Gastrocnemius medialis (tissue), 4 donors: ENCODE measurements at regions of chr12 and their contacts with region 1.

Region 1: DNA sequence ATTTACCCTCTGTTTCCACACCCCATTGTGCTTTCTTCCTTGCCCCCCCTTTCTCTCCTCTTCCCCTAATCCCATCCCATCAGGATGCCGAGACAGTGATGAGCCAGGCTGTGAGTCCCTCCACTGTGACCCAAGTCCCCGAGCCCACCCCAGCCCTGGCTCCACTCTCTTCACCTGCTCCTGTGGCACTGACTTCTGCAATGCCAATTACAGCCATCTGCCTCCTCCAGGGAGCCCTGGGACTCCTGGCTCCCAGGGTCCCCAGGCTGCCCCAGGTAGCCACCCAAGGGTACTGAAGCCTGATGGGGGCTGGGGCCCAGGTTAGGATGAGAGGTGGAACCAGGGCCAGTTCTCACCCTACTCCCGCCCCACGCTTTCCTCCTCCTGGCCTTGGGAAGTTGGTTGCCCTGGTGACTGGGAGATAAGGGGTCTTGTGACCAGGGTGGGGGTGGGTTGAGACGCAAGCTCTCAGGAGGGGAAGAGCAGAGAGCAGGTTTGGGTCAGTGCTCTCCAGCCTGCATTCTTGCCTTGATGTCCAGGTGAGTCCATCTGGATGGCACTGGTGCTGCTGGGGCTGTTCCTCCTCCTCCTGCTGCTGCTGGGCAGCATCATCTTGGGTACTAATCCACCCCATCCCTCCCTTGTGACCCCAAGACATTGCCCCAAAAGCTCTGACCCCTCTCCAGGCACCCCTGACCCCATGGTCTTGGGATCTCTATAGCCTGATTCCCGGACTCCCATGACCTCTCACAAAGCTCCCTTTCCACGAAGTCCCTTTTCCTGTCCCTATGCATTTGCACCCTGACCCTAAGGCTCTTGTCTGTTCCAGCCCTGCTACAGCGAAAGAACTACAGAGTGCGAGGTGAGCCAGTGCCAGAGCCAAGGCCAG is 1.2 kb downstream of the AMHR2 start:
- DNase-seq: no peak
- ATAC-seq: no peak
- H3K4me3 ChIP-seq: no peak overlapping the region
- H3K27ac ChIP-seq: no peak overlapping the region
- H3K4me1 ChIP-seq: peaks cover 2 to 11% of the 10 kb centered on the region in 2 donors
- H3K27me3 ChIP-seq: no peaks in the 10 kb centered on the region
- CTCF ChIP-seq: no peak
- POLR2A ChIP-seq: no peak

Region 2: DNA sequence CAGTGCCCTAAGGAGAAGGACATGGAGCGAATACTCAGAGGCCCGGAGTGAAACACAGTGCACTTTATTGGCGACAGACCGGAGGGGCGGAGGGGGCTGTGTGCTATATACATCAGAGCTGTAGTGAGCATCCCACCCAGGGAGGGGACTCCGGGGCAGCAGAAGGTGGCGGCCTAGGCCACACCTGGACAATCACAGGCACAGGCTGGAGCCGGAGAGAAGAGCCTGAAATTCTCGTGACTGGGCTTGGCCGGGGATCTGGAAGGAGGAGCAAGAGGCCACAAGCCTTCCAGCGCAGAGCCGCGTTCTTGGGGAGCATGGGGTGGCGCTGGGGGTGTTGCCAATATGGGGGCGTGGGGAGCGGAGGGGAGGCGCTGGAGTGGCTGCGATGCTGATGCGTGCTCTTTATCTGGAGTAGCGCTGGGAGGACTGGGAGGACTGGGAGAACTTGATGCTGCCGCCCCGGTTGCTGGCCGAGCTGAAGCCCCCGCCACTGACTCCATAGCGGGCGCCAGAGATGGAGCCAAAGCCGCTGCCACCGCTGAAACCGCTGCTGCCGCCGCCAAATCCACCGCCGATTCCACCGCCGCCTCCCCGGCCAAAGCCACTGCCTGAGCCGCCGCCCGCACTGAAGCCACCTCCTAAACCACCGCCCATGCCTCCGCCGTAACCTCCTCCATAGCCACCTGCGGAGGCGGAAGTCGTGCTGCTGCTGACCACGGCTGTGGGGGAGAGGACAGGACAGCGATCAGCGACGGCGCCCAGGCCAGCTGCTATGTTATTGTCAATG is 635.0 kb before region 1 on chr12:
- in situ Hi-C with region 1: no loop called
- intact Hi-C with region 1: no loop called
- DNase-seq: no peak
- ATAC-seq: no peak
- H3K4me3 ChIP-seq: no peak overlapping the region
- H3K27ac ChIP-seq: no peak overlapping the region
- H3K4me1 ChIP-seq: no peaks in the 10 kb centered on the region
- H3K27me3 ChIP-seq: peaks cover 19 to 22% (median 22%) of the 10 kb centered on the region in 3 donors
- CTCF ChIP-seq: no peak
- POLR2A ChIP-seq: no peak

Region 3: DNA sequence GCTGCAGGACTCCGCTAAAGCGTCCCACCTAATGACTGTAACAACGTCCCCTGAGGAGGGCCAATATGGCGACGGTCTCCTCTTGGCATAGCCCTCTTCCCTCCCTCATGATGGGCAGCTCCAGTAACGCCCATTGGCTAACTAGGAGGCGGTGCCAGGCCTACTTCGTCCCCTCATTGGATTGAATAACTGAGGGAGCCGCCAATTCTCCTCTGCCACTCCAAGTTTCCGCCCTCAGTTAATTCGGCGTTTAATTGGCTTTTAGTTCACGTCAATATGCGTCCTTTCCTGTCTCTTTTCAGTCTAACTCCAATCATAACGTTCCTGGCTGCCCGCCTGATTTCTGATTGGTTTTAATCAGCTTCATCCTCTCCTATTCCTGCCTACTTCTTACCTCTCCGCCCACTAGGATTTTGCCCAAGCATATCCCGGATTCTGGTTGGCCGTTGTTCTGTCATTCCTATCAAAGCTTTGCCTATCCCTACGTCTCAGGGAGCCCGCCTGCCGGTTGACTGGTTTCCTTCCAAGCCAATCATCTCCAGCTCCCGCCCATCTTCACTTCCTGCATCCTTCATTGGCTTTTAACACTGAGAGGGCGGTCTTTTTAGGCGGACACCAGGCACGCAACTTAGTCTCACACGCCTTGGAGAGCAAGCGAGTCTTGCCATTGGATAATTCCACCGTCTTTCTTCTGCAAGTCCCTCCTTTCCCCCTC is 45.3 kb before region 1 on chr12:
- in situ Hi-C with region 1: no loop called
- intact Hi-C with region 1: loop called (anchors 1 kb)
- DNase-seq: peak; percentile 100
- ATAC-seq: peak; percentile 84 to 89
- H3K4me3 ChIP-seq: peak overlapping the region; percentile 57 to 86 (median 66)
- H3K27ac ChIP-seq: peak overlapping the region; percentile 93 to 99 (median 96)
- H3K4me1 ChIP-seq: peaks cover 43 to 46% of the 10 kb centered on the region in 2 donors
- H3K27me3 ChIP-seq: no peaks in the 10 kb centered on the region
- CTCF ChIP-seq: no peak
- POLR2A ChIP-seq: peak; percentile 73 to 83

Region 4: DNA sequence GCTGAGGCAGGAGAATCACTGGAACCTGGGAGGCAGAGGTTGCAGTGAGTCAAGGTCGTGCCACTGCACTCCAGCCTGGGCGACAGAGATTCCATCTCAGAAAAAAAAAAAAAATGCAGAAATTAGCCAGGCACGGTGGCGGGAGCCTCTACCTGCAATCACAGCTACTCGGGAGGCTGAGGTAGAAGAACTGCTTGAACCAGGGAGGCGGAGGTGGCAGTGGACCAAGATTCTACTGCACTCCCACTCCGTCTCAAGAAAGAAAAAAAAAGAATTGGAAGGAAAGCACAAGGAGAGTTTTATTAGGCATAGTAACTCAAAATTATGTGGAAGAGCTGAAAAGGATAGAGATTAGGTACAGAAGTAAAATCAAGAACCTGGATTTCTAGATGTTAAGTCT is 22.0 kb before region 1 on chr12:
- in situ Hi-C with region 1: no loop called
- intact Hi-C with region 1: loop called (anchors 1 kb)
- DNase-seq: no peak
- ATAC-seq: no peak
- H3K4me3 ChIP-seq: no peak overlapping the region
- H3K27ac ChIP-seq: no peak overlapping the region
- H3K4me1 ChIP-seq: peaks cover under 1 to 7% of the 10 kb centered on the region in 2 donors
- H3K27me3 ChIP-seq: no peaks in the 10 kb centered on the region
- CTCF ChIP-seq: no peak
- POLR2A ChIP-seq: no peak

Region 5: GRCh38 chr12:53500776-53501614 is 76.1 kb after region 1 on chr12 and contains the start of gene TARBP2:
- in situ Hi-C with region 1: no loop called
- intact Hi-C with region 1: no loop called
- DNase-seq: peak; percentile 99
- ATAC-seq: peak; percentile 89 to 93
- H3K4me3 ChIP-seq: peak within 1 kb of the TSS; percentile 73 to 84 (median 82)
- H3K27ac ChIP-seq: peak within 1 kb of the TSS; percentile 90 to 97 (median 92)
- H3K4me1 ChIP-seq: peaks cover 24 to 25% of the 10 kb centered on the region in 2 donors
- H3K27me3 ChIP-seq: no peaks in the 10 kb centered on the region
- CTCF ChIP-seq: peak in 1 of 5 experiments; percentile 25
- POLR2A ChIP-seq: peak; percentile 47 to 68
- total RNA-seq, gene TARBP2: 6.8 to 17.4 (median 11.6) TPM